ENCODE measurements at regions of chr17 and their contacts with region 1.

Region 1: GRCh38 chr17:82775001-82775823 is 23.3 kb downstream of the TBCD start:
- DNase-seq: peak; percentile 71 to 89
- ATAC-seq: peak; percentile 79
- H3K4me3 ChIP-seq: no peak overlapping the region
- H3K27ac ChIP-seq: no peak overlapping the region
- H3K4me1 ChIP-seq: no peaks in the 10 kb centered on the region
- H3K27me3 ChIP-seq: no peaks in the 10 kb centered on the region

Region 2: DNA sequence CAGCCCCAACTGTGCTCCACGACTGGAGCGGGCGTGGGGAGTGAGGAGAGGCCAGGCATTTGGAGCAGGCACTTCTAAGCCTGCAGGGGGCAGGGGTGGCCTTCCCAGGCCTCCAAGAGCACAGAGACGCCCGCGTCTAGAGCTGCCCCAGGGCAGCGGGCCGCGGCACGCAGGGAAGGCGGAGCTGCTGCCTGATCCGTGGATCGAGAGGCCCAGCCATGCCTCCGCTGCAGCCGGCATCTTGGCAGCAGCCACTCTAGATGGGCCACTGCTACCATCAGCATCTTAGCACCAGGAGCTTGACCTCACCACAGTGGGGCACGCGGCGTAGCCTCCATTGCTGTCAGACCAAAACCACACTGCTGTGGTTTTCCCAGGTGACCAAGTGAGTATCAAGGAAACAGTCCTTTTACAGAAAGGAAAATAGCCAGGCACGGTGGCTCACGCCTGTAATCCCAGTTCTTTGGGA is 106.5 kb before region 1 on chr17:
- intact Hi-C with region 1: loop called in 1 of 2 experiments (anchors 2 kb)
- DNase-seq: peak; percentile 78 to 81
- ATAC-seq: peak; percentile 46
- H3K4me3 ChIP-seq: no peak overlapping the region
- H3K27ac ChIP-seq: no peak overlapping the region
- H3K4me1 ChIP-seq: no peaks in the 10 kb centered on the region
- H3K27me3 ChIP-seq: no peaks in the 10 kb centered on the region

Region 3: DNA sequence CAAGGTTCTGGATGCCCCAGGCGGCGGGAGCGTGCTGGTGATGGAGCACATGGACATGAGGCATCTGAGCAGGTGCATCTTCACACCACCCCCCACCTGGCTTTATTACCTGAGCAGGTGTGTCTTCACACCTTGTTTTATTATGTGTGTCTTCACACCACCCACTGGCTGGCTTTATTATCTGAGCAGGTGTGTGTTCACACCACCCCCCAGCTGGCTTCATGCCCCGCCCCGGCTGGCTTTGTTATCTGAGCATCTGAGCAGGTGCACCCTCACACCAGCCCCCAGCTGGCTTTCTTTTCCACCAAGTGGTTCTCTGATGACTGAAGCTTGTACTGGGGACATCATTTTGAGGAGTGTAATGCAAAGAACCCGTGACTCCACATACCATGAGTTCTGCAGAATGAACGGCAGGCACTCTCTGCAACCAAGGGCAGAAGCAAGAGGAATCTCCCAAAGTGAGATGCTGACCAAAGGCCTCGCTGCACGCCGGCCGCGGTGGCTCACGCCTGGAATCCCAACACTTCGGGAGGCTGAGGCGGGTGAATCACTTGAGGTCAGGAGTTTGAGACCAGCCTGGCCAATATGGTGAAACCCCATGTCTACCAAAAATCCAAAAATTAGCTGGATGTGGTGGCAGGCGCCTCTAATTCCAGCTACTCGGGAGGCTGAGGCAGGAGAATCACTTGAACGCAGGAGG is 56.1 kb before region 1 on chr17:
- intact Hi-C with region 1: no loop called
- DNase-seq: no peak
- ATAC-seq: no peak
- H3K4me3 ChIP-seq: no peak overlapping the region
- H3K27ac ChIP-seq: no peak overlapping the region
- H3K4me1 ChIP-seq: no peaks in the 10 kb centered on the region
- H3K27me3 ChIP-seq: no peaks in the 10 kb centered on the region

Measured in aorta (tissue), 5 donors.